ENCODE measurements at regions of chr16 and their contacts with region 1.

Region 1: DNA sequence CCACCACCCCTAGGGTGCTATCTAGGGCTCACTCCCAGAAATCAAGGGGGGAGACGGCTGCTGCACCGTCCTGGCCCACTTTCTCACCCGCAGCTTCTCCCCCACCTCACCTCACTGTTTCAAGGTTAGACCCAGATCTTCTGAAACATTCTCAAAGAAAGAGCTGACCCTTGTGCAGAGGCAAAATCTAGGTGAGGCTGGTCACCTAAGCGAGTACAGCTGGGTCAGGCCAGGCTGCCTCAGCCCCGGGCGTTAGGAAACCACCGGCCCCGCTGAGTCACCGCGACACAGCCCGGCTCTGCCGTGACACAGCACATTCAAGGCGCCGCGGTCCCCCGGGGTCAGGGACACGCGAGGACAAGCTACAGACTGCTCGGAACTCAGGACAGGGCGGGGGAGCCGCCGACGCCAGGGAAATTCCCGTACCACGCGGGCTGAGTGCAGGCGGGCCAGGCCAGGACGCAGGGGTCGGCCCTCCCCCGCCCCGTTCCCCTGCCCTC is 27.1 kb downstream of the GNPTG start:
- DNase-seq: peak; percentile 87
- ATAC-seq: peak; percentile 74
- H3K4me3 Mint-ChIP-seq: peak overlapping the region; percentile 87
- H3K27ac Mint-ChIP-seq: peak overlapping the region; percentile 91
- H3K4me1 Mint-ChIP-seq: peaks cover 17% of the 10 kb centered on the region
- H3K27me3 Mint-ChIP-seq: no peaks in the 10 kb centered on the region

Region 2: DNA sequence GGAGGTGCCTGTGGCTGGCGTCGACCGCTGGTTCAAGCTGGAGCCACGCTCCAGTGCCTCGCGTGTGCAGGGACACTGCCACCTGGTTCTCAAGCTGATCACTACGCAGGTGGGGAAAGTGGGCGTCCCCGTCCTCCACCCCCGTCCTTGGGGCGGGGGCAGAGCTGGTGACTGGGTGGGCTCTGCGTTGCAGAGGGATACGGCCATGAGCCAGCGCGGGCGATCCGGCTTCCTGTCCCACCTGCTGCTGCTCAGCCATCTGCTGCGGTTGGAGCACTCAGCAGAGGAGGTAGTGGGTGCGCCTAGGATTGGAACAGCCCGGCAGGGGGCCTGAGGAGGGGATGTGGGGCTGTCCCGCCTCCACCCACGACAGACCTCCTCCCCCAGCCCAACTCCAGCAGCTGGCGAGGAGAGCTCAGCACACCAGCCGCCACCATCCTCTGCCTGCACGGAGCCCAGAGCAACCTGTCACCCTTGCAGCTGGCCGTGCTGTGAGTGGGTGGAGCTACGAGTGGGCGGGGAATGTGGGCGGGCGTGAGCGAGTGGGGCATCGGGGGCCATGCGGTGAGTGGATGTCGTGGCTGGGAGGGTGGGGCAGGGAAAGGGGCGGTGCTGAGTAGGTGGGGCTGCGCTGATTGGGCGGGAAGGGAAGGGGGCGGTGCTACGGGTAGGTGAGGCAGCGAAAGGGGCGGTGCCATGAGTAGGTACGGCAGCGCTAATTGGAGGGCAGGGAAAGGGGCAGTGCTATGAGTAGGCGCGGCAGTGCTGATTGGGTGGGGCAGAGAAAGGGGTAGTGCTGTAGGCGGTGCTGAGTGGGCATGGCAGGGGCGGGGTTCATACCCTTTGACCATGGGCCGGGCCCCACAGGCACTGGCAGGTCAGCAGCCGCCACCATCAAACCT is 36.1 kb before region 1 on chr16:
- CTCF ChIA-PET with region 1: no interaction called
- POLR2A ChIA-PET with region 1: no interaction called
- intact Hi-C with region 1: loop called in 1 of 2 experiments (anchors 1 kb)
- DNase-seq: peak; percentile 96
- ATAC-seq: peak; percentile 98
- H3K4me3 Mint-ChIP-seq: peak overlapping the region; percentile 47
- H3K27ac Mint-ChIP-seq: no peak overlapping the region
- H3K4me1 Mint-ChIP-seq: peaks cover 17% of the 10 kb centered on the region
- H3K27me3 Mint-ChIP-seq: no peaks in the 10 kb centered on the region

Region 3: GRCh38 chr16:1363501-1364041 is 15.3 kb before region 1 on chr16:
- CTCF ChIA-PET with region 1: interaction called, 22 read pairs
- POLR2A ChIA-PET with region 1: no interaction called
- intact Hi-C with region 1: no loop called
- DNase-seq: peak; percentile 88
- ATAC-seq: peak; percentile 99
- H3K4me3 Mint-ChIP-seq: no peak overlapping the region
- H3K27ac Mint-ChIP-seq: no peak overlapping the region
- H3K4me1 Mint-ChIP-seq: peaks cover 2% of the 10 kb centered on the region
- H3K27me3 Mint-ChIP-seq: no peaks in the 10 kb centered on the region

Region 4: DNA sequence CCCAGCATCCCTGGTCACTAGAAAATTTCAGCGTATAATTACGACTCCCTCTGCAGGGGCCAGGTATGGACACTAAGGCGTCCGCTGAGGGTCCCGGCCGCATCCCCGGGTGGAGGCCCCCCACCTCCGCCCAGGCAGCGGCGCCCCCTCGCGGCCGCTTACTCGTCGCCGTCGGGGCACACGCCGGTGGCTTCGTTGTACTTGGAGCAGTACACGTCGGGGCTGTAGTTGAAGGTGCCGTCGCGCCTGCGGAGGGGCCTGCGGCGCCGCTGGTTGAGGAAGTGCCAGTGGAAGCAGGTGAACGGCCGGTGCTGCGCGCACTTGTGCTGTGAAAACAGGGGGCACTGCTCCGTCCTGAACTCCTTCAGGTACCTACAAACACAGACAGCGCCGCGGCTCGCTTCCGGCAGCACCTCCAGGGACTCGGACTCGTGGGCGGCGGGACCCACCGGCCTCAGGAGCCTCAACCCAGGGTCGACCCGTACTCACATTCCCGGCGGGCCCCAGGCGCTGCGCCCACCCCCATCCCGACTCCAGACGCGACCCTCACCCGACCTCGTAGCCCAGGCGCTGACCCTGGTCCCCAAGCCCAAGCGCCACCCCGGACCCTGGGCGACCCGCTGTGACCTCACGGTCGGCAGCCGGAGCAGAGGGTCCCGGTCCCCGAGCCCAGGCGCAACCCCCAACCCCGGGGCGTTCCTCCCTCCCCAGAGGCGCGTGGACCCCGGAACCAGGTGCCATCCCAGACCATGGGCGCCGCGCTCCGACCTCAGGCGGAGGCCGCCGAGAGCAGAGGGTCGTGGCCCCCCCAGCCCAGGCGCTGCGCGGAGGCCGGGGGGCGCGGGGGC is 35.1 kb after region 1 on chr16:
- CTCF ChIA-PET with region 1: interaction called, 3 read pairs
- POLR2A ChIA-PET with region 1: no interaction called
- intact Hi-C with region 1: loop called (anchors 1 to 5 kb)
- DNase-seq: peak; percentile 85
- ATAC-seq: peak; percentile 72
- H3K4me3 Mint-ChIP-seq: peak overlapping the region; percentile 81
- H3K27ac Mint-ChIP-seq: peak overlapping the region; percentile 81
- H3K4me1 Mint-ChIP-seq: peaks cover 24% of the 10 kb centered on the region
- H3K27me3 Mint-ChIP-seq: no peaks in the 10 kb centered on the region

Region 5: GRCh38 chr16:1677802-1678496 is 299.1 kb after region 1 on chr16 and contains the start of gene JPT2:
- CTCF ChIA-PET with region 1: no interaction called
- POLR2A ChIA-PET with region 1: no interaction called
- intact Hi-C with region 1: loop called in 1 of 2 experiments (anchors 1 kb)
- DNase-seq: peak; percentile 98
- ATAC-seq: peak; percentile 99
- H3K4me3 Mint-ChIP-seq: peak within 1 kb of the TSS; percentile 94
- H3K27ac Mint-ChIP-seq: peak within 1 kb of the TSS; percentile 89
- H3K4me1 Mint-ChIP-seq: peaks cover 26% of the 10 kb centered on the region
- H3K27me3 Mint-ChIP-seq: no peaks in the 10 kb centered on the region
- total RNA-seq, gene JPT2: 77.1 to 111 TPM